ENCODE measurements at regions of chr7 and their contacts with region 1.

Region 1: GRCh38 chr7:14288701-14289100 is 299.2 kb upstream of the ETV1 start:
- DNase-seq: no peak
- H3K4me3 ChIP-seq: no peak overlapping the region
- H3K27ac ChIP-seq: no peak overlapping the region
- H3K4me1 ChIP-seq: no peaks in the 10 kb centered on the region
- H3K27me3 ChIP-seq: no peaks in the 10 kb centered on the region
- CTCF ChIP-seq: no peak

Region 2: DNA sequence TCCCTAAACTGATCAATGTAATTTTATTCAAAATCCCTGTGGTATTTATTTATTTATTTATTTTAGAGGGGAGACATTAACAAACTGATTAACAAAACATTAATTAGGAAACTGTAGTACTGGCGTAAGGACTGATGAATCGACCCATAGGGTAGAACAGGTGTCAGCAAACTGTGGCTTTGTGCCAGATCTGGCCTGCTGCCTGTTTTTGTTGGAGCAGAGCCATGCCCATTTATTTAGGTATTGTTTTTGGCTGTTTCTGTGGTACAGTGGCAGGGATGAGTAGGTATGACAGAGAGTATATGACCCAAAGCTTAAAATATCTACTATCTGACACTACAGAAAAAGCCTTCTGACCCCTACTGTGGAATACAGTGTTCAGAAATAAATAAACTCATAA is 33.2 kb after region 1 on chr7:
- CTCF ChIA-PET with region 1: no interaction called
- POLR2A ChIA-PET with region 1: no interaction called
- intact Hi-C with region 1: loop called (anchors 1 kb)
- DNase-seq: no peak
- H3K4me3 ChIP-seq: no peak overlapping the region
- H3K27ac ChIP-seq: no peak overlapping the region
- H3K4me1 ChIP-seq: no peaks in the 10 kb centered on the region
- H3K27me3 ChIP-seq: no peaks in the 10 kb centered on the region
- CTCF ChIP-seq: no peak

Region 3: DNA sequence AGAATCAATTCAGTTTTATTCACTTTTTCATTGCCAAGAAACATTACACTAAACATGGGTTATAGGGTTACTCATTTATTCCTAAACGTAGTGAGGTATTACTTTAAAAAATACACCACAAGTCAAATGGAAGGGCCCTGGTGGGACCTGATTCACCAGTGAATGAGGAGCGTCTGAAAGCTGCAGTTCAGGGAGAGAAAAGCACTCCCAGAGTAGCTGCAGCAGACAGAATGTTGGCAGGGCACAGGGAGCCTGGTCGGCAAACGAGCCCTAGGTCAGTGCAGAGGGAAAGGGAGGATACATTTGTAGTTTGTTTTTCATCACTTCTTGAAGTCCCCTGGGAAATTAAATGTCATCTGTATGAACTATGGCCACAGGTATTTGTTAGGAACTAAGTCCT is 62.5 kb after region 1 on chr7:
- CTCF ChIA-PET with region 1: interaction called, 12 read pairs
- POLR2A ChIA-PET with region 1: no interaction called
- intact Hi-C with region 1: no loop called
- DNase-seq: no peak
- H3K4me3 ChIP-seq: no peak overlapping the region
- H3K27ac ChIP-seq: no peak overlapping the region
- H3K4me1 ChIP-seq: no peaks in the 10 kb centered on the region
- H3K27me3 ChIP-seq: no peaks in the 10 kb centered on the region
- CTCF ChIP-seq: no peak

Measured in PC-9 (cell line).